ENCODE measurements at regions of chr17 and their contacts with region 1.

Region 1: DNA sequence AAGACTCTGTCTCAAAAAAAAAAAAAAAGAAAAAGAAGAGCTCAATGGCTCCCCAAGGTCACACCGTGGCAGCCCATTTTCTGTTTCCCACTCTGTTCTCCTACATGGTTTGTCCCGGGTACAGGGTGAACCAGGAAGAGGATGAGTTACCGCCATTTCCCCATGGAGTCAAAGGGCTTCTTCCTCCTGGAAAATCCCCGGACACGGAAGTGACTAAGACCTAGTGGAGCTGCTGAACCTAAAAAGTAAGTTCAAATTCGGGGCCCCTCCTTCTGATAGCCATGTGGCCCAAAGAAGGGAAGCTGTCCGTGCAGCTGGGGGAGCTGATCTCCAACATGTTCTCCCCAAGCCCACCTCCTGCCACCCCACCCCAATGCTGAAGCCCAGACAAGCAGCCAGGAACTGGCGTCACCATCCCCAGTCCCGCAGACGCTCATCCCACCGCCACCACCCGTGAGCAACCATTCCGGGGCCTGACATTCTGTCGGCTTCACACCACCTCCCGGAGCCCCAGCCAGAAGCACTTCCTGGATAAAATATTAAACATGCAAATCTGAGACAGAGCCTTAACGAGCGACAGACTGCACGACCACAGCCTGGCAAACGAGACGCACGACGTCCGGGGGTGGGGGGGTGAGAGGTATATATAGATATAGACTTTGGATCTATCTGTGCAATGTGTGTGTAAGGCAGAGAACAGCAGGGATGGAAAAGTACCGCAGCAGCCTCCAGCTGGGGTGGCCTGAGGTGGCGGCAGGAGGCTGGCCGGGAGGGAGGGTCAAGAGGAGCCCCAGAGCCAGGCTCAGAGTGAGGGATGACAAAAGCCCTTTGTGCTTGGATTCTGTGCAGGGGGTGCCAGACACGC is 17.6 kb downstream of the EPOP start:
- DNase-seq: no peak
- H3K4me3 Mint-ChIP-seq: no peak overlapping the region
- H3K27ac Mint-ChIP-seq: no peak overlapping the region
- H3K4me1 Mint-ChIP-seq: peaks cover 3% of the 10 kb centered on the region
- H3K27me3 Mint-ChIP-seq: peaks cover 28% of the 10 kb centered on the region

Region 2: GRCh38 chr17:38636054-38636453 is 21.1 kb before region 1 on chr17:
- CTCF ChIA-PET with region 1: no interaction called
- POLR2A ChIA-PET with region 1: no interaction called
- DNase-seq: no peak
- H3K4me3 Mint-ChIP-seq: no peak overlapping the region
- H3K27ac Mint-ChIP-seq: no peak overlapping the region
- H3K4me1 Mint-ChIP-seq: no peaks in the 10 kb centered on the region
- H3K27me3 Mint-ChIP-seq: peaks cover 8% of the 10 kb centered on the region

Region 3: DNA sequence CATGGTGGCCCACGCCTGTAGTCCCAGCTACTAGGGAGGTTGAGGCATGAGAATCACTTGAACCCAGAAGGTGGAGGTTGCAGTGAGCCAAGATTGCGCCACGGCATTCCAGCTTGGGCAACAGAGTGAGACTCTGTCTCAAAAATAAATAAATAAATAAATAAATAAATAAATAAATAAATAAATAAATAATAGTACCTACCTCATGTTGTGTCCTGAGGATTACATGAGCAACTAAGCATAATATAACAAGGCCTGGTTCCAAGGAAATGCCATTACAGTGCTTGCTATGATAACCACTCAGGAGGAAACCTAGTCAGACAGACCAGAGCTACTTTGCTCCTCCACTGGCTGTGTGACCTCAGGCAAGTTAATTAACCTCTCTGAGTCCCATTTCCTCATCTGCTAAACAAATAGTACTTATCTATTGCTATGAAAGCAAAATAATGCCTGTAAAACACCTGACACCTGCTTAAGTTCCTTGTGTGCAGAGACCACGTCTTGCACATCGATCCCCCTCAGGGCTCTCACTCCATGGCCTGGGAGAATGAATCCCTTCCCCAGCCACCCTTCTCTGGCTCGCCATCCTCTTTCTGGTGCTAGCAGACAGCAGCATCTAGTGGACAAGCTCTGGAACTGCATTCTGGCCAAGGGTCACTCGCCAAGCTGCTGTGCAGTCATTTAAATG is 10.1 kb after region 1 on chr17:
- CTCF ChIA-PET with region 1: interaction called, 16 read pairs
- POLR2A ChIA-PET with region 1: no interaction called
- DNase-seq: peak; percentile 57
- H3K4me3 Mint-ChIP-seq: no peak overlapping the region
- H3K27ac Mint-ChIP-seq: no peak overlapping the region
- H3K4me1 Mint-ChIP-seq: peaks cover 8% of the 10 kb centered on the region
- H3K27me3 Mint-ChIP-seq: peaks cover 55% of the 10 kb centered on the region

Region 4: GRCh38 chr17:38702166-38702899 is 45.1 kb after region 1 on chr17:
- CTCF ChIA-PET with region 1: no interaction called
- POLR2A ChIA-PET with region 1: no interaction called
- DNase-seq: peak; percentile 84
- H3K4me3 Mint-ChIP-seq: peak overlapping the region; percentile 93
- H3K27ac Mint-ChIP-seq: peak overlapping the region; percentile 98
- H3K4me1 Mint-ChIP-seq: peaks cover 45% of the 10 kb centered on the region
- H3K27me3 Mint-ChIP-seq: no peaks in the 10 kb centered on the region